Activated T-helper 2 cell treated with anti-CD3 and anti-CD28 coated beads, Interferon-gamma antibody, Interleukin-2, Interleukin-4, amounts not matched to agents 10 μg/mL and 5 μg/mL and 100 μg/mL, durations not matched to agents 14 hours and 24 hours and 36 hours (primary cell): ENCODE measurements at regions of chr2 and their contacts with region 1.

Region 1: GRCh38 chr2:212843409-212844199 is 305.0 kb upstream of the ERBB4 start:
- DNase-seq: no peak
- H3K4me3 Mint-ChIP-seq: no peak overlapping the region
- H3K27ac Mint-ChIP-seq: no peak overlapping the region
- H3K4me1 Mint-ChIP-seq: peaks cover 10% of the 10 kb centered on the region
- H3K27me3 Mint-ChIP-seq: peaks cover 23% of the 10 kb centered on the region

Region 2: GRCh38 chr2:212686285-212686895 is 157.2 kb before region 1 on chr2:
- intact Hi-C with region 1: loop called (anchors 10 kb)
- DNase-seq: peak; percentile 17
- H3K4me3 Mint-ChIP-seq: no peak overlapping the region
- H3K27ac Mint-ChIP-seq: no peak overlapping the region
- H3K4me1 Mint-ChIP-seq: no peaks in the 10 kb centered on the region
- H3K27me3 Mint-ChIP-seq: peaks cover 4% of the 10 kb centered on the region

Region 3: GRCh38 chr2:212797484-212798205 is 46.0 kb before region 1 on chr2:
- intact Hi-C with region 1: loop called (anchors 5 kb)
- DNase-seq: no peak
- H3K4me3 Mint-ChIP-seq: no peak overlapping the region
- H3K27ac Mint-ChIP-seq: no peak overlapping the region
- H3K4me1 Mint-ChIP-seq: no peaks in the 10 kb centered on the region
- H3K27me3 Mint-ChIP-seq: peaks cover 7% of the 10 kb centered on the region

Region 4: GRCh38 chr2:212811036-212811805 is 32.4 kb before region 1 on chr2:
- intact Hi-C with region 1: loop called (anchors 2 kb)
- DNase-seq: no peak
- H3K4me3 Mint-ChIP-seq: no peak overlapping the region
- H3K27ac Mint-ChIP-seq: no peak overlapping the region
- H3K4me1 Mint-ChIP-seq: peaks cover 14% of the 10 kb centered on the region
- H3K27me3 Mint-ChIP-seq: peaks cover 13% of the 10 kb centered on the region

Region 5: GRCh38 chr2:213036836-213037235 is 193.2 kb after region 1 on chr2:
- intact Hi-C with region 1: no loop called
- DNase-seq: no peak
- H3K4me3 Mint-ChIP-seq: no peak overlapping the region
- H3K27ac Mint-ChIP-seq: no peak overlapping the region
- H3K4me1 Mint-ChIP-seq: peaks cover 23% of the 10 kb centered on the region
- H3K27me3 Mint-ChIP-seq: peaks cover 12% of the 10 kb centered on the region